Activated B cell treated with CpG ODN at 0.5 μM for 24 hours (primary cell): ENCODE measurements at regions of chr4 and their contacts with region 1.

Region 1: GRCh38 chr4:54233277-54233696 is 4.2 kb downstream of the PDGFRA start:
- DNase-seq: peak; percentile 68
- ATAC-seq: peak; percentile 80
- H3K4me3 Mint-ChIP-seq: peak overlapping the region; percentile 82
- H3K27ac Mint-ChIP-seq: no peak overlapping the region
- H3K4me1 Mint-ChIP-seq: peaks cover 30% of the 10 kb centered on the region
- H3K27me3 Mint-ChIP-seq: peaks cover 54% of the 10 kb centered on the region
- CTCF ChIP-seq: peak; percentile 17

Region 2: DNA sequence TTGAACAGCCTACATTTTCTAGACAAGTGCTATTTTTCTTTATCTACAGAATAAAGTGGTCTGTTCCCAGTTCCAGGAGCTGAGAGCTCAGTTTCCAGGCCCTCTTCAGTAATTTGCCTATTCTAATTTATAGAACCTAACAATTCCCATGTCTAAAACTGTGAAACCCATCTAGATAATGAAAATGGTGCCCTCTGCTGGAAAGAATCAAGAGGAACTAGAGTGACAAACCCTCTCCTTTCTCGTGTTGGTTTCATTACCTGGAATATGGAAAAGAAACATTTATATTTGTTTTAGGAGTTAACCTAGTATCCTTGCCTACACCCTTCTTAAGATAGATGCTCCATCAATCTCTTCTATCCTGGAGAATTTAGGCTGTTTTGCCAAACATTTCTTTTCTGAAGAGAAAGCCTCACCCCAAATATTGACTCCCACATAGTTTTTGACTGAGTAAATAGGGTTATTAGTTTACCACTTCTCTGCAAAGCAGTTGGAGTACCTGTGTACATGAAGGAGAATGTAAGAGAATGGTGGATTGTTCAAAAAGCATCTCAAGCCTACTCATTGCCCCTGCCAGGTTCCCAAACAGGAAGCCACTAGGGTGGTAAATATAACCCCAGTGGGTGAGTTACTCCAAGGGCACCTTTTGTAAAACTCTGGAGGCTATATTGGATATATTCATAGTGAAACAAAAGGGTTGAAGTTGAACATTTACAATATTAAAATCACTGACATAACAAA is 1249.6 kb before region 1 on chr4:
- CTCF ChIA-PET with region 1: interaction called, 9 read pairs
- POLR2A ChIA-PET with region 1: no interaction called
- intact Hi-C with region 1: loop called (anchors 1 kb)
- DNase-seq: no peak
- ATAC-seq: no peak
- H3K4me3 Mint-ChIP-seq: no peak overlapping the region
- H3K27ac Mint-ChIP-seq: no peak overlapping the region
- H3K4me1 Mint-ChIP-seq: no peaks in the 10 kb centered on the region
- H3K27me3 Mint-ChIP-seq: no peaks in the 10 kb centered on the region
- CTCF ChIP-seq: peak; percentile 22

Region 3: DNA sequence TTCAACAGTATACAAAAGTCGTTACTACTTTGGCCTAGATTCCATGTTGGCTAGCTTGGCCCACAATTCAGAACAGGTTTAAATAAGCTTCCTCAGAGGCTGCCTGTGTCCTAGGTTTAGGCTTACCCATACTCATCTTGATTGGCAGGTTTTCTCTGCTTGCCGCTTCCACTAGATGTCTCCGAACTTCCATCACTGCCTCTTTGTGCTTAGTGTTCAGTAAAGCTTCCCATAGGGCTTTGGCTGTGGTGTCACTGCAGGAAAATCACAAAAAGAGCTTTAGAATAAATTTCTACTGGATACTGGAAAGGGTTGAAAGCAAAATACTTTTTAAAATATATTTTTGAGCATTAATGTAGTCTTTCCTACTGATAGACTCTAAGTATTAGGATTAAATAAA is 919.8 kb before region 1 on chr4:
- CTCF ChIA-PET with region 1: no interaction called
- POLR2A ChIA-PET with region 1: no interaction called
- intact Hi-C with region 1: no loop called
- DNase-seq: no peak
- ATAC-seq: no peak
- H3K4me3 Mint-ChIP-seq: no peak overlapping the region
- H3K27ac Mint-ChIP-seq: no peak overlapping the region
- H3K4me1 Mint-ChIP-seq: peaks cover 2% of the 10 kb centered on the region
- H3K27me3 Mint-ChIP-seq: no peaks in the 10 kb centered on the region
- CTCF ChIP-seq: no peak

Region 4: DNA sequence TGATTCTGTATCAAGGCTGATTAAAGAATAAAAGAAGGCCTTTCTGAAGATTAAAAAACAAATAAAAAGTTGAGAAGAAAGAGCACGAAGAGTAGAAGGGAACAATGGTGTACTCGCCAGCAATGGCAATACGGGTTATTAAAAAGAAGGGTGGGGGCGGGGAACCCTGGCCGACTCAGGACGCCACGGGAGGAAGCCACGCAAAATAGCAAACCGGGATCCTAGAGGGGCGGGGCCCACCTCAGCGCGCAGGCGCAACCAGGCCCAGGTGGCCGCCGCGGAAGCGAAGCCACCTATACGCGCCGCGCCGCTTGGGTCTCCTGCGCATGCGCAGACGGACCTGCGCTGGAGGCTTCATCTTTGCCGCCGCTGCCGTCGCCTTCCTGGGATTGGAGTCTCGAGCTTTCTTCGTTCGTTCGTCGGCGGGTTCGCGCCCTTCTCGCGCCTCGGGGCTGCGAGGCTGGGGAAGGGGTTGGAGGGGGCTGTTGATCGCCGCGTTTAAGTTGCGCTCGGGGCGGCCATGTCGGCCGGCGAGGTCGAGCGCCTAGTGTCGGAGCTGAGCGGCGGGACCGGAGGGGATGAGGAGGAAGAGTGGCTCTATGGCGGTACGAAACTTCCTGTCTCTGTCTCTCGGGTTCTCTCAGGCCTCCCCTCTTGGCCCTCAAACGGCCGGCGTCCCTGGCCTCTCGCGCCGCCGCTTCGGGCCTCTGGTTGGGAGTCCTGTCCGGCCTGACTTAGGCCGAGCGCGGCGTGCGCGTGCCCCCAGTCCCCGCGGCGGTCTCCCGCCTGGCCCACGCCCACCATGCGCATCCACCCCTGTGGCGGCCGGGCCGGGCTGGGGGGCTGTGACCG is 855.7 kb before region 1 on chr4 and contains the start of gene FIP1L1:
- CTCF ChIA-PET with region 1: no interaction called
- POLR2A ChIA-PET with region 1: no interaction called
- intact Hi-C with region 1: loop called (anchors 5 kb)
- DNase-seq: peak; percentile 97
- ATAC-seq: peak; percentile 91
- H3K4me3 Mint-ChIP-seq: peak within 1 kb of the TSS; percentile 99
- H3K27ac Mint-ChIP-seq: peak within 1 kb of the TSS; percentile 98
- H3K4me1 Mint-ChIP-seq: peaks cover 34% of the 10 kb centered on the region
- H3K27me3 Mint-ChIP-seq: no peaks in the 10 kb centered on the region
- CTCF ChIP-seq: no peak
- total RNA-seq, gene FIP1L1: 72.7 and 80.1 TPM in 2 replicates

Region 5: DNA sequence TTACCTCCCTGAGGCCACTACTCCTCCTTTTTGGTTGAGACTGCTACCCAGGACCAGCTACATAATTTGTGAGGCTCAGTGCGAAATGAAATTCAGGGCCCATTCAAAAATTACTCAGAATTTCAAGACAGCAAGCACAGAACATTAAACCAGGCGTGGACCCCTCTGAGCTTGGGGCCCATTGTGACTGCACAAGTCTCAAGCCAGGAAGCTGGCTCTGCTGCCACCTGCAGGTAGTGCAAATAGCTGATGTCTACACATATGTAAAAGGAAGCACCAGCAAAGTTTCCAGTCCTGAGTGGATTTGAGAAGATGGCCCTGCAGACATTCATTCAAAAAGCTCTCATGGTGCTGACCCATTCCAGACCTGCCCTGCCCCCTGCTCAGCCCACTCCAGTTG is 428.6 kb before region 1 on chr4:
- CTCF ChIA-PET with region 1: no interaction called
- POLR2A ChIA-PET with region 1: no interaction called
- intact Hi-C with region 1: loop called (anchors 5 kb)
- DNase-seq: peak; percentile 23
- ATAC-seq: no peak
- H3K4me3 Mint-ChIP-seq: no peak overlapping the region
- H3K27ac Mint-ChIP-seq: no peak overlapping the region
- H3K4me1 Mint-ChIP-seq: no peaks in the 10 kb centered on the region
- H3K27me3 Mint-ChIP-seq: peaks cover 2% of the 10 kb centered on the region
- CTCF ChIP-seq: no peak

Region 6: DNA sequence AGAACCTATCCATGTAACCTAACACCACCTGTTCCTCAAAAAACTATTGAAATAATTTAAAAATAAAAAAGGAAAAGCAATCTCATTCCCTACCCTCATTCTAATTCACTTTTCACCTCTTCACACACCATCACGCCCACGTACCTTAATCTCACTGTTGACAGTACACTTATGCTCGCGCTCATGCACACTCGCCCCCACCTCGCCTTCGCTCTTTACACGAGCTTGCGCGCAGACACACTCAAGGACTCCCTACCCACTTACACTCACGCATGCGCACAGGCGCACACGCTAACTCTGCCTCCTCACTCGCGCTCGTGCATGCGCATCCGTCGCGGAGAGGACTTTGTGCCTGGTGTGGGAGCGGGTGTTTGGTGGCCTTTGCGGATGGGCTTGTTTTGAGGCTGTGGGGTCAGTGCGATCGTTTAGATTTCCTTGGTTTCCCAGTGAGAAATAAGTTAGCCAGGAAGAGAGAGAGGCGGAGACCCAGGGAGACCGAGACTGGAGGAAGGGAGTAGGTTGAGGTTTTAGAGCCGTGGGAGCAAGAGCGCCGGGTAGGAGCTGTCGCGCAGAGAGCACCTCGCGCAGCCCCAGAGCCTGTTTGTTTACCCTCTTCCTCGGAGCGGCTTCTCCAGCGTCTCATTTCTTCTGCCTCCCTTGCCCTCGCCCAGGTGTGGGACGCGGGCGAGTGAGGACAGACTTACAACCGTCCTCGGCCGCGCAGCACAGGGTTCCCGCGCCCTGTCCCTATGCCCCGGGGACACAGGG is 141.5 kb before region 1 on chr4:
- CTCF ChIA-PET with region 1: interaction called, 5 read pairs
- POLR2A ChIA-PET with region 1: interaction called, 3 read pairs
- intact Hi-C with region 1: loop called (anchors 2 kb)
- DNase-seq: peak; percentile 55
- ATAC-seq: peak; percentile 91
- H3K4me3 Mint-ChIP-seq: peak overlapping the region; percentile 87
- H3K27ac Mint-ChIP-seq: peak overlapping the region; percentile 59
- H3K4me1 Mint-ChIP-seq: peaks cover 33% of the 10 kb centered on the region
- H3K27me3 Mint-ChIP-seq: peaks cover 63% of the 10 kb centered on the region
- CTCF ChIP-seq: no peak